Ascending aorta (tissue), 2 donors: ENCODE measurements at regions of chr1 and their contacts with region 1.

Region 1: DNA sequence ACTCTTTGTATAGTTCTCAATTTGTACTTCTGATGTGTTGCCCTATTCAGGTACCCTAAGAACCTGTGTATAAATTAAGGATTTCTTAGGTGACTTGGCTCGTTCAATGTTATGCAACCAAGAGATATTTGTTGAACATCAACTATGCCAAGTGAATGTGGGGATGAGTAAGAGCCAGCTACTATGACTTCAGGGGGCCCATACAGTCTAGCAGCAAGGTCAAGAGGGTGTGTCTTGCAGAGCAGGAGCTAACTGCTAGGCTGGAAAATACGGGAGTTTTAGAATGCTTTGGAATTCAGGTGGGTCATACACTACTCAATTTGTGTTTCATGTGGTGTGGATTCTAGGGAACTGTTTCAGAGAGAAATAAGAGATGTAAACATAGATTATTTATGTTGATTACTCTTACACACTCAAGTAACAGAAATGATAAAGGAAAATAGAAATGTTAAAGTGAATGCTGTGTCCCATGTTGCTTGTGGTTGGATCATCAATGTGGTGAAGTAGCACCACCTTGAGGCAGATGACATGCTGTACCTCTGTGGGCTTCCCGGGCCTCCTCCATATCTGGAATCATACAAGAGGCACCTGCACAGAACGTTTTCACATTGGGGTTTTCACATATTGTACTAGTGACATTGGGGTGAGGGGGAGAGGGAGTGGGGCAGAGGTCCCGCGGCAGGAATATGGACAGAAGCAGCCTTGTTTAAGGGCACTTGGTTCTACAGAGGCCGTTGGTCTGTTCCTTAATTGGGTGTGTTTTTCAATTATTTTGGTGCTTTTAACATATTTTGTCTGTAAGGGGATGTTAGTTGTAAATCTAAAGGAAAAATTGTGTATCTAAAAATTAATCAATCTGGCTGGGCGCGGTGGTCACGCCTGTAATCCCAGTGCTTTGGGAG is 12.4 kb downstream of the ARPC5 start:
- DNase-seq: no peak
- H3K4me3 ChIP-seq: no peak overlapping the region
- H3K27ac ChIP-seq: peak overlapping the region; percentile 39 to 53
- H3K4me1 ChIP-seq: peaks cover 15 to 34% of the 10 kb centered on the region in 2 donors
- H3K27me3 ChIP-seq: no peaks in the 10 kb centered on the region
- CTCF ChIP-seq: peak; percentile 30 to 66 (median 57)

Region 2: GRCh38 chr1:183543619-183544204 is 79.4 kb before region 1 on chr1:
- intact Hi-C with region 1: loop called (anchors 5 kb)
- DNase-seq: no peak
- H3K4me3 ChIP-seq: no peak overlapping the region
- H3K27ac ChIP-seq: no peak overlapping the region
- H3K4me1 ChIP-seq: no peaks in the 10 kb centered on the region
- H3K27me3 ChIP-seq: no peaks in the 10 kb centered on the region
- CTCF ChIP-seq: peak in 2 of 3 experiments; percentile 48 to 56

Region 3: DNA sequence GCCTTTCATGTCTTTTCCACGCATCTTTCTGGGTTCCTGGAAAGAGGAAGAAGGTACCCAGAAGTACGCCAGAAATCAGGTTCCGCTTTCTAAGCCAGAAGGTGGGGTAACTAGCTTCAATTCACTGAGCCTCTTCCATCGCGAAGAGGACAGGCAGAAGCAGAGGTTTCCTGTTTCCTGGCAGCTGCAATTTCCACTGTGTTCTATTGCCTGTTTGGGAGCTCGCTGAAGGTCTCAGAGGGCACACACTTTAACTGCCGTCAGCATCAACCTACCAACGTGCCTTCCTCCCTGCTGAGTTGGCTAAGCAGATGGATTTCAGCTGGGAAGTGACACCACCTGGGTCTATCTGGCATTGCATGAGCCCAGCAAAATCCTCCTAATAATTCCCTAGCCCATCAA is 42.9 kb before region 1 on chr1:
- intact Hi-C with region 1: loop called (anchors 5 kb)
- DNase-seq: peak; percentile 27 to 65
- H3K4me3 ChIP-seq: no peak overlapping the region
- H3K27ac ChIP-seq: peak overlapping the region in 1 of 2 donors; percentile 14
- H3K4me1 ChIP-seq: peaks cover 18 to 29% of the 10 kb centered on the region in 2 donors
- H3K27me3 ChIP-seq: no peaks in the 10 kb centered on the region
- CTCF ChIP-seq: no peak